ENCODE measurements at regions of chrX and their contacts with region 1.

Region 1: GRCh38 chrX:65595460-65595876 is 60.9 kb upstream of the LAS1L start:
- DNase-seq: peak; percentile 88 to 100 (median 89)
- ATAC-seq: peak; percentile 98
- H3K4me3 ChIP-seq: no peak overlapping the region
- H3K4me1 ChIP-seq: peaks cover 2% of the 10 kb centered on the region
- CTCF ChIP-seq: peak; percentile 86

Region 2: GRCh38 chrX:65493431-65493830 is 102.0 kb before region 1 on chrX:
- intact Hi-C with region 1: no loop called
- DNase-seq: no peak
- ATAC-seq: no peak
- H3K4me3 ChIP-seq: no peak overlapping the region
- H3K4me1 ChIP-seq: no peaks in the 10 kb centered on the region
- CTCF ChIP-seq: no peak

Region 3: GRCh38 chrX:65706041-65706828 is 110.8 kb after region 1 on chrX:
- intact Hi-C with region 1: loop called in 1 of 2 experiments (anchors 10 kb)
- DNase-seq: no peak
- ATAC-seq: peak; percentile 36
- H3K4me3 ChIP-seq: no peak overlapping the region
- H3K4me1 ChIP-seq: peaks cover 7% of the 10 kb centered on the region
- CTCF ChIP-seq: no peak

Region 4: DNA sequence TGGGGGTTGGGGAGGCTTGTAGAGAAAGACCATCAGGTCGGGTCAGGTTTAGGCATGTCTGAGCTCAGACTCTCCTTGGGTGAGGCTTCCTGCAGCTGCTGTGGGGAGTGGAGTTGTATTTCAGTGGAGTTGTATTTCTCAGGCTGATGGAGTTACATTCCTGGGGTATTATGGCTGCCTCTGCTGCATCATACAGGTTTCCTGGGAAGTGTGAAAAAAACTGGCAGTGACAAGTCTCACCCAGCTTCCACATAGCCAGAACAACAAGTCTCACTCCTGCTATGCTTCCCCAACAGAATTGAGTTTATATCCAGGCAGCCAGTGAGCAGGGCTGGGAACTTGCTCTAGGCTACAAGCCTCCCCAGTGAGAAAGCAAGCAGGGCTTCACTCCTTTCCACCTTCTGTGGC is 325.2 kb after region 1 on chrX:
- intact Hi-C with region 1: no loop called
- DNase-seq: no peak
- ATAC-seq: no peak
- H3K4me3 ChIP-seq: no peak overlapping the region
- H3K4me1 ChIP-seq: no peaks in the 10 kb centered on the region
- CTCF ChIP-seq: no peak